Activated CD4-positive, alpha-beta memory T cell treated with anti-CD3 and anti-CD28 coated beads for 36 hours (primary cell): ENCODE measurements at regions of chr7 and their contacts with region 1.

Region 1: DNA sequence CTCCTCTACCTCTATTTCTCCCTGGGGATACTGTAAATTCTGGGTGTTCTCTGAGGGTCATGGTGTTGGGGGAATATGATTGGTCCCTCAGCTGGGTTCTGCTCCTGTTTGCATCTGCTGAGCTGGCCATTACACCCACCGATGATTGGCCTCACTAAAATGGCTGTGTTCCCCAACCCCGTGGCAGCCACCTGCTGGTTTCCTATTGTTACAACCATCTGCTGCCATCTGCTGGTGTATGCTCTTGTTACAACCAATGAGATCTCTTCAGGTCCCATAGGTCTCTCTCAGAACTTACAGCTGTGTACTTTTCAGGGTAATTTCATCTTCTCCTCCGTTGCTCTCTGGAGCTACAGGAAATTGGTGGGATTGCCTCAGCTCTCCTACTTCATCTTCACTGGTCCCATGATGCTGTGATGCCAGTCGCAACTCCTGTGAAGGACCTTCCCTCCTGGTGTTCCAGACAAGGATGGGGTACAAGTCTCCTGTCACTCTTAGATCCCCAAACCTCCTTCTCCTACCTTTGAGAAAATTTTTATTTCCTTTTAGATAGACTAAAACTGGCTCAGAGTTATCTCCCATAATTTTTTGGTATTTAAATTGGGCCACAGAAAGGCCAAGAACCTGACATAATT is 303.5 kb upstream of the SMIM30 start:
- DNase-seq: peak; percentile 80
- H3K4me3 Mint-ChIP-seq: no peak overlapping the region
- H3K27ac Mint-ChIP-seq: no peak overlapping the region
- H3K4me1 Mint-ChIP-seq: peaks cover 3% of the 10 kb centered on the region
- H3K27me3 Mint-ChIP-seq: peaks cover 3% of the 10 kb centered on the region

Region 2: DNA sequence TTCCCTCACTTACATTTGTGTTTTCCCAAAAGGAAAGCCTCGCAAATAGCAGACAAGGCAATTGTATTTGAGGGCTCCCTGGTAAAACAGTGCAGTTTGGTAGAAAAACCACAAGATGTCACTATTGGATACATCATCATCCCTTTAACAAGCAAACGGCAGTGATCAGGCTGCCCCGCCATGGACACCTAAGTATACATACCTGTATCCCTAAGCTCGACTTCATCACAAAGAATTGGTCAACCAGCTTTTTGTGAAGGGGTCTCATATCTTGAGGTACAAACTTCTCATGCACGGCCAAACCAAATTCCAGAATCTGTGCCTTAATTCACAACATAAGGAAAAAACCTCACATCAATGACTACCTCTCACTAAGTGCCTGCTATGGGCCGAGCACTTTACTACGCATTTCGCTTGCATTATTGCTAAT is 1680.0 kb before region 1 on chr7:
- CTCF ChIA-PET with region 1: interaction called, 3 read pairs
- POLR2A ChIA-PET with region 1: no interaction called
- intact Hi-C with region 1: loop called (anchors 5 kb)
- DNase-seq: peak; percentile 32
- H3K4me3 Mint-ChIP-seq: no peak overlapping the region
- H3K27ac Mint-ChIP-seq: no peak overlapping the region
- H3K4me1 Mint-ChIP-seq: no peaks in the 10 kb centered on the region
- H3K27me3 Mint-ChIP-seq: peaks cover 3% of the 10 kb centered on the region

Region 3: DNA sequence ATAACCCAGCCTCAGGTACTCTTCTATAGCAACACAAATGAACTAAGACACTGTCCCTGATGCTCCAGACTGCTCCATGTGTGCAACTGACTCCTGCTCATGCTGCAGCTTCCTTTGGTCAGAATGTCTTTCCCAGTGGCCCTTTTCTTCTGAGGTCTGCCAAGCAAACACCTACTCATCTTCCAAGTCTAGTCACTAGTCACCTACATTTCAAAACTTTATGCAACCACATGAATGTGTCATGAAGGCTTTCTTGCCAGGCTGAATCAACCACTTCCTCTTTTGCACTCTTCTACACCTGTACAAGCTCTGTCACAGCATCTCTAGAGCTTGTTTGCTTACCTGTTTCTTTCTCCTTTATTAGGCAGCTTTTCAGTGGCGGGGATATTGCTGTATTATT is 865.2 kb before region 1 on chr7:
- CTCF ChIA-PET with region 1: interaction called, 8 read pairs
- POLR2A ChIA-PET with region 1: no interaction called
- intact Hi-C with region 1: loop called (anchors 1 kb)
- DNase-seq: peak; percentile 37
- H3K4me3 Mint-ChIP-seq: no peak overlapping the region
- H3K27ac Mint-ChIP-seq: no peak overlapping the region
- H3K4me1 Mint-ChIP-seq: peaks cover 17% of the 10 kb centered on the region
- H3K27me3 Mint-ChIP-seq: no peaks in the 10 kb centered on the region

Region 4: DNA sequence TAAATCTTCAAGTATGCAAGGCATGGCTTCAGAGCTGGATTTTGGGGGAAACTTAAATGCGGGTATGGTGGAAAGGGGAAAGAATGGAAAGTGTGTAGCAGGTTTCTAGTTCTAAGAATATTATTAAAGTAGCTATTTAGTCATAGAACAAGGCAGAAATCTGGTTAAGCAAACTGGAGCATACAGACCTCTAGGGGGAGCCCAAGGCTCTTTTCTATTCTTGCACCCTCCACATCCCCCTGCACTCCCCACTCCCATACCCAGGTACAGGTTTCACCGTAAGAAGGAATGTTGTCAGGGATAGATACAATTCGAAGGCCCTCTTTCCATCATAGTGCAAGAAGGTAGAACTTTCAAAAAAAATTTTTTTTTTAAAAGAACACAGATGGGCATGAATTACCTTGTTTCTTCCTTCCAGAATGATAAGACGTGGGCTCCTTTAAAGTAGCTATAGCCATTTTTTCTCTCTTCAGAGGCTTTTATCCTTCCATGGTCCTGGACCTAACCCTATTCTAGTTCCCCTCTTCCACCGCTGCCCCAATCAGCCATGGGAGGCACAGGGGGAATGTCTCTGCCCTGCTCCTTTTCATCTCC is 262.0 kb before region 1 on chr7:
- CTCF ChIA-PET with region 1: interaction called, 23 read pairs
- POLR2A ChIA-PET with region 1: no interaction called
- intact Hi-C with region 1: loop called (anchors 1 kb)
- DNase-seq: peak; percentile 10
- H3K4me3 Mint-ChIP-seq: no peak overlapping the region
- H3K27ac Mint-ChIP-seq: no peak overlapping the region
- H3K4me1 Mint-ChIP-seq: no peaks in the 10 kb centered on the region
- H3K27me3 Mint-ChIP-seq: peaks cover 7% of the 10 kb centered on the region

Region 5: DNA sequence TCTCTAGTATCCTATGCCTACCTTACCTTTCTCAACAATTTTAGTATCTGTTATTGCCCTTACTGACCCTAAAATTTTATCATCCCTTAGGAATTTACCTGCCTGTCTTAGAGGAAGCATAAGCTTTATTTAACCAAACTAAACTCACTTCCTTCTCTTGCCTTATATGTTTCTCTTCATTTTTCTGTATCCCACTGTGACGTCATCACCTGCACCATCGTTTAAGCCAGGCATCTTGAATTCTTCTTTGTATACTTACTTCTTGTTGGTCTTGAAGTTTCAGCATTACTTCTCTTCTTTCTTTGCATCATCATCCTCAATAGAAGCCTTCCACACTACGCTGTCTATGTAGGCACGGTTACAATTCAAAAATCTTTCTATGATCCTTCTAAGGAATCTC is 72.5 kb before region 1 on chr7:
- CTCF ChIA-PET with region 1: no interaction called
- POLR2A ChIA-PET with region 1: no interaction called
- intact Hi-C with region 1: no loop called
- DNase-seq: no peak
- H3K4me3 Mint-ChIP-seq: no peak overlapping the region
- H3K27ac Mint-ChIP-seq: no peak overlapping the region
- H3K4me1 Mint-ChIP-seq: no peaks in the 10 kb centered on the region
- H3K27me3 Mint-ChIP-seq: no peaks in the 10 kb centered on the region

Region 6: DNA sequence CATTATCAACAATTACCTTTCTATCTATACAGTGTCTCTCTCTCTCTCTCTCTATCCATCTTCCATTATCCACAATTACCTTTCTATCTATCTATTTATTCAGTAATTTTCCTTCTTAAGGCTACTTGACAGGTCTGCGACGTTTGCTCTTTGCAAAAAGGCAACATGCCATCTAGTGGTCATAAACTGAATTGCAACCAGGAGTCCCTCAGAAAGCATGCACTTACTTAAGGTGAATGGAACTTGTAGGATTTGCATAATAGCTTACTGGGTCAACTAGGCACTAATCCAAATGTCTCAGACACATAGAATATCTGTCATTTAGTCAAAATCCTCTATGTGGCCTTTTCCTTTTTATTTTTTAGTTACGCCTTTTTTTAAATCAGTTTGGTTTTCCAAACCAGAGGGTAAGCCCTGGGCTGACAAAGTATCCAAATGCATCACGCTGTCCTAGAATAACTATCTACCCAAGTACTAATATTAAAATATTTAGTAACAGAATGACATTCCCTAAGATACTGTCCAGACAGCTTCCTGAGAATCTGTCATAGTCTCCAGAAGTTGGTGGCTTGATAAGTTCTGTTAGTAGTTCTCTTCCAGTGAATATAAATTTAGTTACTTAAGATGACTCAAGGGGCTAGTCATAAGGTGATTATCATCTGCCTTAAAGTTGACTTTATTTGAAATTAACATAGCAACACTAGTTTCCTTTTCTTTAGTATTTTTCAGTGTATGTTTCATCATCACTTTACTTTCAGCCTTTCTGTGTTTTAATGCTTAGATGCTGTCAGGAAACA is 288.7 kb after region 1 on chr7:
- CTCF ChIA-PET with region 1: no interaction called
- POLR2A ChIA-PET with region 1: no interaction called
- intact Hi-C with region 1: loop called (anchors 10 kb)
- DNase-seq: peak; percentile 24
- H3K4me3 Mint-ChIP-seq: no peak overlapping the region
- H3K27ac Mint-ChIP-seq: no peak overlapping the region
- H3K4me1 Mint-ChIP-seq: no peaks in the 10 kb centered on the region
- H3K27me3 Mint-ChIP-seq: peaks cover 4% of the 10 kb centered on the region